CD4-positive, alpha-beta T cell (primary cell): ENCODE measurements at regions of chr1 and their contacts with region 1.

Region 1: GRCh38 chr1:15835741-15836510 is 11.6 kb upstream of the SPEN start:
- DNase-seq: peak; percentile 97 to 100 (median 99)
- ATAC-seq: peak; percentile 54
- H3K4me3 ChIP-seq: peak overlapping the region; percentile 70
- H3K4me3 Mint-ChIP-seq: peak overlapping the region; percentile 98
- H3K27ac ChIP-seq: peak overlapping the region; percentile 96 to 99
- H3K27ac Mint-ChIP-seq: peak overlapping the region; percentile 99
- H3K4me1 ChIP-seq: peaks cover 35% of the 10 kb centered on the region
- H3K4me1 Mint-ChIP-seq: peaks cover 26% of the 10 kb centered on the region
- H3K27me3 ChIP-seq: no peaks in the 10 kb centered on the region
- H3K27me3 Mint-ChIP-seq: no peaks in the 10 kb centered on the region
- CTCF ChIP-seq: no peak

Region 2: GRCh38 chr1:15578921-15579682 is 256.8 kb before region 1 on chr1:
- CTCF ChIA-PET with region 1: no interaction called
- POLR2A ChIA-PET with region 1: no interaction called
- intact Hi-C with region 1: no loop called
- DNase-seq: peak in 13 of 14 experiments; percentile 13 to 81 (median 48)
- ATAC-seq: peak; percentile 92
- H3K4me3 ChIP-seq: no peak overlapping the region
- H3K4me3 Mint-ChIP-seq: peak overlapping the region; percentile 67
- H3K27ac ChIP-seq: peak overlapping the region; percentile 64
- H3K27ac Mint-ChIP-seq: peak overlapping the region; percentile 97
- H3K4me1 ChIP-seq: peaks cover 58% of the 10 kb centered on the region
- H3K4me1 Mint-ChIP-seq: peaks cover 55% of the 10 kb centered on the region
- H3K27me3 ChIP-seq: no peaks in the 10 kb centered on the region
- H3K27me3 Mint-ChIP-seq: no peaks in the 10 kb centered on the region
- CTCF ChIP-seq: no peak

Region 3: GRCh38 chr1:15775706-15776105 is 60.2 kb before region 1 on chr1:
- CTCF ChIA-PET with region 1: no interaction called
- POLR2A ChIA-PET with region 1: no interaction called
- intact Hi-C with region 1: no loop called
- DNase-seq: no peak
- ATAC-seq: no peak
- H3K4me3 ChIP-seq: no peak overlapping the region
- H3K4me3 Mint-ChIP-seq: no peak overlapping the region
- H3K27ac ChIP-seq: no peak overlapping the region
- H3K27ac Mint-ChIP-seq: no peak overlapping the region
- H3K4me1 ChIP-seq: no peaks in the 10 kb centered on the region
- H3K4me1 Mint-ChIP-seq: no peaks in the 10 kb centered on the region
- H3K27me3 ChIP-seq: peaks cover 0 to 8% of the 10 kb centered on the region in 2 experiments
- H3K27me3 Mint-ChIP-seq: no peaks in the 10 kb centered on the region
- CTCF ChIP-seq: no peak

Region 4: GRCh38 chr1:15866721-15867201 is 30.8 kb after region 1 on chr1:
- CTCF ChIA-PET with region 1: interaction called, 3 read pairs
- POLR2A ChIA-PET with region 1: interaction called, 12 read pairs
- intact Hi-C with region 1: no loop called
- DNase-seq: no peak
- ATAC-seq: no peak
- H3K4me3 ChIP-seq: no peak overlapping the region
- H3K4me3 Mint-ChIP-seq: no peak overlapping the region
- H3K27ac ChIP-seq: no peak overlapping the region
- H3K27ac Mint-ChIP-seq: no peak overlapping the region
- H3K4me1 ChIP-seq: peaks cover 19% of the 10 kb centered on the region
- H3K4me1 Mint-ChIP-seq: peaks cover 63% of the 10 kb centered on the region
- H3K27me3 ChIP-seq: no peaks in the 10 kb centered on the region
- H3K27me3 Mint-ChIP-seq: no peaks in the 10 kb centered on the region
- CTCF ChIP-seq: no peak

Region 5: DNA sequence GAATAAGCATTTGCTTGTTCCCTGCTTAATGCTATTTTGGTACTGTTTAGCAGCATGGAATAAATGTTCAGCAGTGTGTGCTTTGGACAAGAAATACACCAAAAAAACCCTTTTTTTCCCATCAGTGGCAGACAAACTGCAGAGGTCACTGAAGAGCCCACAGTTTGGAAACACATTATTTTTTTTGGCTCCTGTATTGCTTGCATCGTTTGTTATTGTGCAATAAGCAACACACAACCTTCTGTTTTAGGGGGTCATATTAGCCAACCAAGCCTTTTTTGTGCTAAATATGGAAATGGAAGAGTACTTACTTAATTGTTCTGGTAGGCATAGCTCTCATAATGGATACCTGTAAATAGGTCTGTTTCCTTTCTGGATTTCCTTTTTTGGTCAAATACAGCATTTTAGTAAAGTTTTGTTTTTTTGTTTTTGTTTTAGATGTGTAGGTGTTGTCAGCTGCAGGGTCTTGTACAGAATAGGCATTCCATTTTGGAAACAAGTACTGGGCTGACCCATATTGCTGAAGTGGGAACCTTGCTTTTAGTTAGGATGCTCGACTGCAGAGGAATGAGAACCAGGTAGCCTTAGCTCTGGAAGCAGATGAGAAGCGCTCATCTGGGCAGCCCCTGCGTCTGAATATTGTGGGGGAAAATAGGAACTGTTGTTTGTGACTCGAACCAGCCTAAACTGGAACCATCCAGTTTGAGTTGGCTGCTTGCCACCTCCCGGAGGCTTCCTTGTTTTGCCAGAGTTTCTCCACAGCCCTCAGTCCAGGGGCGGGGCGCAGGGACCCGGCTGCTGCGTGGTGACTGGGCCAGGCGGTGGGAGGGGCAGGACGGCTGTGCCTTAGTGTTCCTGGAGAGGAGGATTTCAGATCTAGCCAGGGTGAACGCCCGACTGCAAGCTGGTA is 50.0 kb after region 1 on chr1:
- CTCF ChIA-PET with region 1: no interaction called
- POLR2A ChIA-PET with region 1: interaction called, 3 read pairs
- intact Hi-C with region 1: loop called in 1 of 2 experiments (anchors 5 kb)
- DNase-seq: peak in 11 of 14 experiments; percentile 2 to 70 (median 33)
- ATAC-seq: peak; percentile 60
- H3K4me3 ChIP-seq: peak overlapping the region; percentile 26
- H3K4me3 Mint-ChIP-seq: peak overlapping the region; percentile 52
- H3K27ac ChIP-seq: no peak overlapping the region
- H3K27ac Mint-ChIP-seq: peak overlapping the region; percentile 68
- H3K4me1 ChIP-seq: peaks cover 33% of the 10 kb centered on the region
- H3K4me1 Mint-ChIP-seq: peaks cover 69% of the 10 kb centered on the region
- H3K27me3 ChIP-seq: no peaks in the 10 kb centered on the region
- H3K27me3 Mint-ChIP-seq: no peaks in the 10 kb centered on the region
- CTCF ChIP-seq: no peak

Region 6: GRCh38 chr1:15918962-15919715 is 83.2 kb after region 1 on chr1:
- CTCF ChIA-PET with region 1: no interaction called
- POLR2A ChIA-PET with region 1: interaction called, 5 read pairs
- intact Hi-C with region 1: loop called in 1 of 2 experiments (anchors 5 kb)
- DNase-seq: peak in 9 of 14 experiments; percentile 14 to 71 (median 27)
- ATAC-seq: peak; percentile 84
- H3K4me3 ChIP-seq: no peak overlapping the region
- H3K4me3 Mint-ChIP-seq: no peak overlapping the region
- H3K27ac ChIP-seq: no peak overlapping the region
- H3K27ac Mint-ChIP-seq: peak overlapping the region; percentile 18
- H3K4me1 ChIP-seq: peaks cover 17% of the 10 kb centered on the region
- H3K4me1 Mint-ChIP-seq: peaks cover 30% of the 10 kb centered on the region
- H3K27me3 ChIP-seq: no peaks in the 10 kb centered on the region
- H3K27me3 Mint-ChIP-seq: no peaks in the 10 kb centered on the region
- CTCF ChIP-seq: no peak

Region 7: DNA sequence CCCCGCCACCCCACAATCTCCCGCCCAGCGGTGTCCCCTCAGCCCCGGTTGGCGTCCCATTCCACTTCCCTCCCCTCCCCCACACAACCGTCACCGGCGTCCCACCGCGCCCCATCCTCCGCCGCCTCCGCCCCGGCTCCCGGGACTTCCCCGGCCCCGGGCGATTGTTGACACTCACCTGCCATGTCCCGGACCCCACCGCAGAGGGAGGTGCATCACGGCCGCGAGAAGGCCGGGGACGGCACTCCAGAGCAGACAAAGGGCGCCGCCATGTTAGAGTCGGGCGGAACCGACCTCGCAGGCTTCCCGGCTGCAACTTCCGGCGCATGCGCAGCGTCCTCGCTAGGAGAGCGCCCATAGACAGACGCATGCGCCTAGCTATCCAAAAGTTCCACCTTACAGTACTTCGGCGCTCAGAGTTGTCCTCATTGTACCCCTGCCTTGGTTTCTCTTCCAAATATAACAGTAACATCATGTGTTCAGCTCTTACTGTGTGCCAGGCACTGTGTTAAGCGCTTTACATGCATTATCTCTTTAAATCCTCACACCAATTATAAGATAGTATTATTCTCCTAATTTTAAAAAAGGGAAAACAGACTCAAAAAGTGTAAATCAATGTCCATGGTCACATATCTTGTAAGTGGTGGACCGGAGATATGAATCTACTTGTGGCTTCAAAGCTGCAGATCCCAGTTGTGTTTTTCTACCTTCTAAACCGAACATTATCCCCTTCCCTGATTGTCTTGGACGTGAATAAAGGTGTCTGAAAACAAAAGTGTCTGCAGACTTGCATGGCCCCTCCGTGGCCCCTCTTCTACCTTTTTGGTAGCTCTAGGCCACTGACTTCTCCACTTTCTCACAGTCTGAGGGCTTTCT is 140.1 kb after region 1 on chr1 and contains the start of gene ZBTB17:
- CTCF ChIA-PET with region 1: interaction called, 4 read pairs
- POLR2A ChIA-PET with region 1: interaction called, 29 read pairs
- intact Hi-C with region 1: loop called in 1 of 2 experiments (anchors 5 kb)
- DNase-seq: peak; percentile 91 to 99 (median 94)
- ATAC-seq: peak; percentile 92
- H3K4me3 ChIP-seq: peak within 1 kb of the TSS; percentile 91
- H3K4me3 Mint-ChIP-seq: peak within 1 kb of the TSS; percentile 99
- H3K27ac ChIP-seq: peak within 1 kb of the TSS; percentile 67 to 70
- H3K27ac Mint-ChIP-seq: peak within 1 kb of the TSS; percentile 92
- H3K4me1 ChIP-seq: peaks cover 37% of the 10 kb centered on the region
- H3K4me1 Mint-ChIP-seq: peaks cover 34% of the 10 kb centered on the region
- H3K27me3 ChIP-seq: no peaks in the 10 kb centered on the region
- H3K27me3 Mint-ChIP-seq: no peaks in the 10 kb centered on the region
- CTCF ChIP-seq: no peak
- total RNA-seq, gene ZBTB17: 70.2 to 78.1 TPM

Region 8: GRCh38 chr1:16249596-16250241 is 413.8 kb after region 1 on chr1:
- CTCF ChIA-PET with region 1: no interaction called
- POLR2A ChIA-PET with region 1: no interaction called
- intact Hi-C with region 1: no loop called
- DNase-seq: no peak
- ATAC-seq: no peak
- H3K4me3 ChIP-seq: no peak overlapping the region
- H3K4me3 Mint-ChIP-seq: no peak overlapping the region
- H3K27ac ChIP-seq: no peak overlapping the region
- H3K27ac Mint-ChIP-seq: peak overlapping the region; percentile 78
- H3K4me1 ChIP-seq: peaks cover 4% of the 10 kb centered on the region
- H3K4me1 Mint-ChIP-seq: peaks cover 22% of the 10 kb centered on the region
- H3K27me3 ChIP-seq: no peaks in the 10 kb centered on the region
- H3K27me3 Mint-ChIP-seq: no peaks in the 10 kb centered on the region
- CTCF ChIP-seq: no peak